Activated CD4-positive, alpha-beta T cell treated with anti-CD3 and anti-CD28 coated beads, Interleukin-2, amount 10 ng/mL, durations not matched to agents 24 days and 14 days (primary cell): ENCODE measurements at regions of chr11 and their contacts with region 1.

Region 1: GRCh38 chr11:68459886-68460740 is 439 bp upstream of the PPP6R3 start:
- DNase-seq: peak; percentile 97
- H3K4me3 Mint-ChIP-seq: peak overlapping the region; percentile 95
- H3K27ac Mint-ChIP-seq: peak overlapping the region; percentile 94
- H3K4me1 Mint-ChIP-seq: peaks cover 35% of the 10 kb centered on the region
- H3K27me3 Mint-ChIP-seq: peaks cover 4% of the 10 kb centered on the region

Region 2: DNA sequence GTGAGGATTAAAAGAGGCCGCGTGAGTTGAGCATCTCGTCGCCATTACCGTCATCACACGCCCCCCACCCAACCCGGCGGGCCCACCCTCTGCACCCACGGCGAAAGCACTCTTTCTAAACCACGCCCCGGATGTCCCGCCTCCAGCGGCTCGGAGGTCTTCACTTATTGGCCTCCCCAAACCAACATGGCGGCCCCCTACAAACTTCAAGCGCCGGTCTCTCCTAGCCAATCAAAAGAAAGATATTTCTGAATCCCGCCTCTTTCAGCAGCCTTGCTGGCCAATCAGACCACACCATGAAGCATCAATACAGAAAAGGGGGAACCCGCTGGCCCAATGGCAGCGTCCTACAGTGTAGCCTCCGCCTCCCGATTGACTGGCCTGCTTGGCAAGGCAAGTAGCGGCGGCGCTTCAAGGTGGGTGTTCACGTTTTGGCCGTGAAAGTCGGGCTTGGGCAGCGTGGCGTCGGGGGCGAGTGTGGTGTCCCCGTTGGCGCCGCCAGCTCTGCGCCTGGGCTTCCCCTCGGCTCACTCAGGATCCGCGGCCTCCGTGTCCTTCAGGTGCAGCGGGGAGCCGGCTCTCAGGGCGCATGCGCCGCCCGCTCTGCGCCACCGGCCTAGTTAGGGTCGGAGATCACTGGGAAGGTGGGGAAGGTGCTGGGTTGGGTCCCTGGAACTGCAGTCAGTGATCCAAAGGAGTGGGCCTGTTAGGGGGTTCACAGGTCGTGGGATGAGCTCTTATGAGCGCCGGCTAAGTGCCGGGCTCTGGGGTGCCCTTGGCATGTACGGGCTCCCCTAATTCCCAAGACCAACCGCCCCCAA is 429.6 kb before region 1 on chr11 and contains the start of gene NDUFS8:
- intact Hi-C with region 1: loop called (anchors 5 kb)
- DNase-seq: peak; percentile 99
- H3K4me3 Mint-ChIP-seq: peak within 1 kb of the TSS; percentile 84
- H3K27ac Mint-ChIP-seq: peak within 1 kb of the TSS; percentile 87
- H3K4me1 Mint-ChIP-seq: peaks cover 23% of the 10 kb centered on the region
- H3K27me3 Mint-ChIP-seq: no peaks in the 10 kb centered on the region
- total RNA-seq, gene NDUFS8: 153 and 159 TPM in 2 replicates

Region 3: GRCh38 chr11:68471360-68472340 is 11.5 kb after region 1 on chr11:
- intact Hi-C with region 1: loop called (anchors 1 kb)
- DNase-seq: peak; percentile 86
- H3K4me3 Mint-ChIP-seq: peak overlapping the region; percentile 86
- H3K27ac Mint-ChIP-seq: peak overlapping the region; percentile 89
- H3K4me1 Mint-ChIP-seq: peaks cover 65% of the 10 kb centered on the region
- H3K27me3 Mint-ChIP-seq: no peaks in the 10 kb centered on the region

Region 4: GRCh38 chr11:68524681-68525080 is 64.6 kb after region 1 on chr11:
- intact Hi-C with region 1: loop called (anchors 5 kb)
- DNase-seq: no peak
- H3K4me3 Mint-ChIP-seq: no peak overlapping the region
- H3K27ac Mint-ChIP-seq: no peak overlapping the region
- H3K4me1 Mint-ChIP-seq: peaks cover 58% of the 10 kb centered on the region
- H3K27me3 Mint-ChIP-seq: no peaks in the 10 kb centered on the region

Region 5: DNA sequence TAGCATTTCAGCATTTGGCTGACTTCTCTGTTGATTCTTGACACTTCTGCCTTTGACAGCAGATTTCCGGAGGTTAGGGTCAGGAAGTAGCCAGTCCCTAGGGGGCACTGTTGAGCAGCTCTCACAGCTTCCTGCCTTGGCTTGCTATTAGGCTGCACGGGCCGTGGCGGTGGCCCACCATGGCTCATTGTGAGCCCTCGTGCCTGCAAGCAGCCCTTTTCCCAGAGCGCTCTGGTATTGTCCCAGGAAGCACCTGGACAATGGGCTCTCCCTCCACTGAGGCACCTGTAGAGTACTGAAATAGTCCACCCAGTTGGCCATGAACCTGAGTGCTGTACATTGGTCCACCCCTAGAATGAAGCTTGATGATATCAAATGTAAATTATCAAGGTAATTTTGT is 124.0 kb after region 1 on chr11:
- intact Hi-C with region 1: loop called (anchors 10 kb)
- DNase-seq: peak; percentile 84
- H3K4me3 Mint-ChIP-seq: no peak overlapping the region
- H3K27ac Mint-ChIP-seq: no peak overlapping the region
- H3K4me1 Mint-ChIP-seq: peaks cover 14% of the 10 kb centered on the region
- H3K27me3 Mint-ChIP-seq: no peaks in the 10 kb centered on the region

Region 6: DNA sequence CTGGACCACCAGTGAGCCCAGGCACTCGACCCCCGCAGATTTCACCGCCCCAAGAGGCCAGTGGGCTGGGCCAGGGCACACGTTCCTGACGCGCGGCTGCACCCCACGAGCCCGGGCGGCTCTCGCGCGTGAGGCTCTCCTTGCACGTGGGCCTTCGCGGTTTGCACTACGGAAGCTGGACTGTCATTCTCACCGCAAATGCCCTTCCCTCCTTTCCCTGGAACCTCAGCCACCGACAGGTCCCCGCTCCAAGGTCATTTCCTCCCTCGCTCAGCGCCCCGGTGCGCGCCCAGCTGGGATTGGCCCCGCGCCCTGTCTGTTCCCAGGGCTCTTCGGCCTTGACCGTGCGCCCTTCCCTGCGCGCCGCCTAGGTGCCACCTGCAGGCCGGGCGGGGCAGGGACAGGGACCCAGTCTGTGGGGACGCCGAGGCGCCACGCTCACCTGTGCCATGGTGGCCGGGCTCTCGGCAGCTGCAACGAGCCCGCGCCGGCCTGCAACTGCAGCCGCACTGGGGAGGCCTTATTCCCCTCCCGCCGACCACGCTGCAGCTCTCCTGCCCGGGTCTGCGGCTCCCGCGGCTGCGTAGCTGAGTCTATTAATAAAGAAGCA is 383.7 kb after region 1 on chr11:
- intact Hi-C with region 1: loop called (anchors 2 kb)
- DNase-seq: peak; percentile 90
- H3K4me3 Mint-ChIP-seq: peak overlapping the region; percentile 81
- H3K27ac Mint-ChIP-seq: peak overlapping the region; percentile 81
- H3K4me1 Mint-ChIP-seq: peaks cover 30% of the 10 kb centered on the region
- H3K27me3 Mint-ChIP-seq: peaks cover 15% of the 10 kb centered on the region